ENCODE measurements at regions of chr2 and their contacts with region 1.

Region 1: GRCh38 chr2:219836647-219837177 is 209.3 kb downstream of the SLC4A3 start:
- DNase-seq: no peak
- ATAC-seq: no peak
- H3K4me3 ChIP-seq: no peak overlapping the region
- H3K27ac ChIP-seq: no peak overlapping the region
- H3K4me1 ChIP-seq: no peaks in the 10 kb centered on the region
- H3K27me3 ChIP-seq: no peaks in the 10 kb centered on the region
- CTCF ChIP-seq: peak in 11 of 12 donors; percentile 27 to 59 (median 45)
- POLR2A ChIP-seq: no peak

Region 2: DNA sequence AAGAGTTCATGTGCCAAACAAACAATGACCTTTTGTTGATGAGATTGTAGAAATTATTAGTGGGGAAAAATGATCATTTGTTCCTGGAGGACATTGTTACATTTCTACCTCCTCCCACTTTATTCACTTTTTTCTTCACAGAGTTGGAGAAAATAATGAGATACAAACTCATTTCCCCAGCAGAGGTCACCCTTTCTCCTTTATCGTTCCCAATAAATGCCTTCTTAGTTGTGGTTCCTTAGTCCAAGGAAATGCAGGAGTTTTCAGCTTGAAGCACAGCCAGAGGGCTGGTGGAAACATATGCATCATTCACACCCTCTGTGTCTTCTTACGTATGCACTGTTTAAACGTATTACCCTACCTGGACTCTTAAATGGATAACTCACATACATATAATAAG is 100.5 kb before region 1 on chr2:
- intact Hi-C with region 1: loop called (anchors 1 to 5 kb)
- DNase-seq: no peak
- ATAC-seq: peak; percentile 40 to 75 (median 56)
- H3K4me3 ChIP-seq: no peak overlapping the region
- H3K27ac ChIP-seq: no peak overlapping the region
- H3K4me1 ChIP-seq: peaks cover 0 to 12% (median 2%) of the 10 kb centered on the region in 12 donors
- H3K27me3 ChIP-seq: peaks cover 0 to 4% (median 0%) of the 10 kb centered on the region in 9 donors
- CTCF ChIP-seq: peak; percentile 21 to 71 (median 54)
- POLR2A ChIP-seq: no peak

Region 3: GRCh38 chr2:219783359-219783975 is 53.2 kb before region 1 on chr2:
- intact Hi-C with region 1: no loop called
- DNase-seq: no peak
- ATAC-seq: no peak
- H3K4me3 ChIP-seq: no peak overlapping the region
- H3K27ac ChIP-seq: no peak overlapping the region
- H3K4me1 ChIP-seq: no peaks in the 10 kb centered on the region
- H3K27me3 ChIP-seq: no peaks in the 10 kb centered on the region
- CTCF ChIP-seq: no peak
- POLR2A ChIP-seq: no peak

Region 4: DNA sequence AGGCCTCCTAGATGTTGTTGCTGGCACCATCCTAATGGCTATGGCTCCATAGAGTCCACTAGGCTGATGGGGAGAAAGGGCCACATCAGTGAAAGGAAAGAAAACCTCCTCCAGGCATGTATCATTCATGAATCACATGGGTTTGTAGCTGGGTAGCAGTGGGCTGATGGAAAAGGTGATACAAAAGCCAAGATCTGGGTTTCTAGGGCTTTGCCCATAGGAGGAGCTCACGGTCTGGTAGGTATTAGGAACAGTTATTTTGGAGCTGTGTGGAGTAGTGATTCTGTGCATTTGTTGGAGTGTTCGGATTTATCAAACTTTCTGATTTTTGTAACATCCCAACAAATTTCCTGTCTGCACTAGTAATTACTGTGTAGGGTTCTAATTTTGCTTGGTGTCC is 49.9 kb after region 1 on chr2:
- intact Hi-C with region 1: no loop called
- DNase-seq: no peak
- ATAC-seq: no peak
- H3K4me3 ChIP-seq: no peak overlapping the region
- H3K27ac ChIP-seq: no peak overlapping the region
- H3K4me1 ChIP-seq: no peaks in the 10 kb centered on the region
- H3K27me3 ChIP-seq: peaks cover 0 to 4% (median 0%) of the 10 kb centered on the region in 9 donors
- CTCF ChIP-seq: no peak
- POLR2A ChIP-seq: no peak

Measured in heart left ventricle (tissue), 16 donors.